MCF 10A (cell line): ENCODE measurements at regions of chr15 and their contacts with region 1.

Region 1: GRCh38 chr15:37880009-37880834 is 54.2 kb upstream of the TMCO5A start:
- DNase-seq: peak; percentile 34
- H3K4me3 Mint-ChIP-seq: no peak overlapping the region
- H3K27ac Mint-ChIP-seq: no peak overlapping the region
- H3K4me1 Mint-ChIP-seq: peaks cover 11% of the 10 kb centered on the region
- H3K27me3 Mint-ChIP-seq: peaks cover 98% of the 10 kb centered on the region
- CTCF ChIP-seq: peak; percentile 68

Region 2: DNA sequence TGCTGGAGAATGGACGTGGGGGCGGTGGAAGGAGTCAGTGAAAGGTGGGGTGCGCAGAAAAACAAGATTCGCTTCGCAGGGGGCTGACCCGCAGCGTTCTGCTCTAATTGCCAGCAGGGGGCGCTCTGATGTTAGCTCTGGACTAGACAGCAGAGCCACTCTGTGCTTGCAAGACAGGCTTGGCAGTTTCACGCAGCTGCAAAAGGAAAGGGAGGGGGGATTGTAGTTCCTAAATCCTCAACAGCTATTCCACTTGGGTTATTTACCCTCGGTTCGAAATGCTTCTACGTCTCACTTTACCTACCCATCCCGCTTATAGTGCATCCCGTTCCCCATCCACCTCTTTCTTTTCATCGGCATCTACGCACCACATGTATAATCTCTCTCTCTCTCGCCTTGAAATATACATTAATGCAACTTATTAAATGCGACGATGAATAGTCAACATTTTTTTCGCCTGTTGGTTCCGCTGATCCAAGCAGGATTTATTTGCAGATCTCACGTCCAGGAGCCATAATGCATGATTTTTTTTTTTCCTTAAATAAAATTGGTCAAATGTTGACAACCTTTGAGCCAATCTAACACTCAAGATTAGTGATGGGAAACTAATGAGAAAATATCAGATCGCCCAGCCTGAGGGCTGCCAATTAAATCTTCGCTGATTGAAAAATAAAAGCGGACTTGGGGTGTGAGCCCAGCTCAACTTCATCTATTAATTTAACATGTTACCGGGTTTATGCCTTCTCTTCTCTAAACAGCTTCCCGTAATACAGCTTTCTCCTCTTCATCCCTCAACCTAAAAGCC is 996.3 kb before region 1 on chr15:
- CTCF ChIA-PET with region 1: interaction called, 13 read pairs
- POLR2A ChIA-PET with region 1: no interaction called
- intact Hi-C with region 1: loop called (anchors 5 kb)
- DNase-seq: peak; percentile 83
- H3K4me3 Mint-ChIP-seq: peak overlapping the region; percentile 23
- H3K27ac Mint-ChIP-seq: no peak overlapping the region
- H3K4me1 Mint-ChIP-seq: peaks cover 10% of the 10 kb centered on the region
- H3K27me3 Mint-ChIP-seq: peaks cover 65% of the 10 kb centered on the region
- CTCF ChIP-seq: peak; percentile 85

Region 3: GRCh38 chr15:37682304-37682703 is 197.9 kb before region 1 on chr15:
- CTCF ChIA-PET with region 1: interaction called, 3 read pairs
- POLR2A ChIA-PET with region 1: no interaction called
- intact Hi-C with region 1: loop called (anchors 5 kb)
- DNase-seq: peak; percentile 36
- H3K4me3 Mint-ChIP-seq: no peak overlapping the region
- H3K27ac Mint-ChIP-seq: no peak overlapping the region
- H3K4me1 Mint-ChIP-seq: no peaks in the 10 kb centered on the region
- H3K27me3 Mint-ChIP-seq: no peaks in the 10 kb centered on the region
- CTCF ChIP-seq: no peak

Region 4: GRCh38 chr15:37824717-37825382 is 55.4 kb before region 1 on chr15:
- CTCF ChIA-PET with region 1: interaction called, 3 read pairs
- POLR2A ChIA-PET with region 1: no interaction called
- intact Hi-C with region 1: loop called (anchors 5 kb)
- DNase-seq: peak; percentile 67
- H3K4me3 Mint-ChIP-seq: no peak overlapping the region
- H3K27ac Mint-ChIP-seq: no peak overlapping the region
- H3K4me1 Mint-ChIP-seq: peaks cover 7% of the 10 kb centered on the region
- H3K27me3 Mint-ChIP-seq: peaks cover 27% of the 10 kb centered on the region
- CTCF ChIP-seq: peak; percentile 39

Region 5: DNA sequence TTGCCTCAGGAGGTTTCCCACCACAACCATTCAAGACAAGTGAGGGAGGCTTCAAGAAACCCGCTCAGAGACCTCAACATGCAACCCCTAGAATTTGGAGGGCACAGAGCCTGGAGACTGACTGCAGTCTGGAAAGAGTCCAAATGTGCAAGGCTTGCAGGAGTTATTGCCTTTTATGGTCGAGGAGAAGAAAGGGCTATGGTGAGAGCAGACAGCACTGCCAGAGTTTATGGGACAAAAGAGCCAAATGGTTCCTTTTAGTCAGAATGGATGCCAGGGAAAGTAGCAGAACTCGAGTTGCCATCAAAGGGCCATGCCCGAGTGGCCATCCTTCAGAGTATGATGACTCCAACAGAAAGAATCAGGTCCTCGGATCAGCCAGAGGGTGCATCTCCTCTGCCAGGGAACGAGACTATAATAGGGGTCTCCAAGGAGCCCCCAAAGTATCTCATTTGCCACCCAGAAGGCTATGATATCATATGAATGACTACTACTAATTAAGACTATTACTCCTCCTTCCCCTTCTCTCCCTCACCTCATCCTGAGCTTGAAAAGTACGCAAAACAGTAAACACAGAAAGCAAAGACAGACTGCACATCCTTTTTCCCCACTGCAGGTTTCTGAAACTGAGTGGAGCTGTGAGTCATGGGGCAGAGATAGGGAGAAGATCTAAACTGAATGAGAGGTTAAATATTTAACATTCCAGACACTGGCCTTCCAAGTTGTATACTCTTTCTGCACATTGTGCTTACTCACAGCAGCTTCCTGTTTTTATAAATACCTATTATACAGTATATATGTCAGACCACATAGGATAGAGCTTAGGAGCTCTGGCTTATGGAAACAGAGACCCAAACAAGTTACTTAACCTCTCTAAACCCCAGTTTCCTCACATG is 20.4 kb after region 1 on chr15:
- CTCF ChIA-PET with region 1: interaction called, 14 read pairs
- POLR2A ChIA-PET with region 1: no interaction called
- intact Hi-C with region 1: no loop called
- DNase-seq: peak; percentile 29
- H3K4me3 Mint-ChIP-seq: no peak overlapping the region
- H3K27ac Mint-ChIP-seq: no peak overlapping the region
- H3K4me1 Mint-ChIP-seq: peaks cover 8% of the 10 kb centered on the region
- H3K27me3 Mint-ChIP-seq: peaks cover 18% of the 10 kb centered on the region
- CTCF ChIP-seq: no peak